ENCODE measurements at regions of chr2 and their contacts with region 1.

Region 1: GRCh38 chr2:20584637-20585321 is 66.1 kb downstream of the HS1BP3 start:
- DNase-seq: peak in 9 of 10 donors; percentile 43 to 89 (median 71)
- H3K4me3 ChIP-seq: no peak overlapping the region
- H3K27ac ChIP-seq: peak overlapping the region; percentile 7 to 90 (median 80)
- H3K27me3 ChIP-seq: no peaks in the 10 kb centered on the region
- CTCF ChIP-seq: peak in 6 of 56 donors; percentile 8 to 37 (median 15)

Region 2: DNA sequence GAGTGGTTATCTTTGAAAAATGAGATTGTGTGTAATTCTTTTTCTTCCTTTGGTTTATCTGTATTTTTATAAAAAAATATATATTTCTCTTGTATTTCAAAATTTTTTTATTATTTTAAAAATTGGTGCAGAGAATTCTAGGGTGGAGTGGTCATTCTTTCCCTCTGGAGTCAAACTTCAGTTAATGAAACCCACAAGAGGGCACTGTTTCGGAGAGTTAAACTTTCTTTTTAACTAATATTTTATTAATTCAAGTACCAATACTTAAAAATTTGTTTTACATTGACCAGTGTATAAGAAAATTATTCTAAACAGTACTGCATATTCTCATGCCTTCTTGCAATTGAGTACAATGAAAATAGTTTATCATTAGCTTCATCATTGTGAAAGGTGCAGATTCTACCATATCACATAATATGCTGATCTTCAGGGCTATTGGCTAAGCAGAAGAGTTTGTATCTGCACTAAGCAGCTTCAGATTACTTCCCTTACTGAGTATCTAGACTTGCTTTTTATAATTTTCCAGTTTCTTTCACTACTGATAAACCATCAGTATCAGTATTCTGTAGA is 16.1 kb after region 1 on chr2:
- intact Hi-C with region 1: loop called in 1 of 2 experiments (anchors 2 kb)
- DNase-seq: no peak
- H3K4me3 ChIP-seq: peak overlapping the region in 6 of 59 donors; percentile 6 to 32 (median 18)
- H3K27ac ChIP-seq: peak overlapping the region in 58 of 59 donors; percentile 64 to 98 (median 93)
- H3K27me3 ChIP-seq: no peaks in the 10 kb centered on the region
- CTCF ChIP-seq: peak; percentile 24 to 77 (median 54)

Region 3: DNA sequence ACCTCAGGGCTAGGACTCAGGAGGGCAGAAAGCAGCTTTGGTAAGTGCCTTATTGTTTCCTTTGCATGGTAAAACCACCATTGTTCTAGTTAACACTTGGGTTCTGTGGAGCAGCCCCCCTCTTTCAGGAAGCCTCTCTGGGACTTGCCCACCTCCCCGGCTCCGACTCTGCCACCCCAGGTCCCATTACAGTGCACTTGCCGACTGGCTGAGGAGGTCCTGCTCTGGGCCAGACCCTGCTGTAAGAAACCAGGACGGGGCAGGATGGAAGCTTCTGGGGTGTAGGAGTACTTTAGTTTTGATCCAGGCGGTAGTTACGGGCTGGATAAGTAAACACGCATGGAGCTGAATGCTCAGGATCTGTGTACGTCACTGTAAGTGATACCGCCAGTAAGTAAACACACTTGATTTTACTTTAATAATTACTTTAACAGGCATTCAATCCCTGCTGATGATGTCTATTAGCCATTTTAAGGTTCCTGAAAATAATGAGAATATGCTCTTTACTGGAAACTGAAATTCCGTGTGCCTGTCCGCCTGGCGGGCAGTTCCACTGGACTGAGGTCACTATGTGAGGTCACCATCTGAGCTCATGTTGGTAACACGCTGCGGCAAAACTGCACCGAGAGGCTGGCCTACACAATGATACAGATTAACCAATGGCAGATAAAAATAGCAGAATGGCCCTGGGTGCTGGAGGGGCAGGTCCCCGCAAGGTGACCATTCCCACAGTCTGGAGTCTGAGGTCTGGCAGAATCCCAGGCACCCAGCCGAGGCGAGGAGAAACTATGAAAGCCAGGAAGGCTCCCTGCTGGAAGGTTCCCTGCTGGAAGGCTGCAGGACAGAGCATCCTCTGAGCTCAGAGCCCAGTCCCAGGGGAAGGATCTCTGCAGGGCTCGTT is 41.0 kb after region 1 on chr2:
- intact Hi-C with region 1: loop called in 1 of 2 experiments (anchors 5 kb)
- DNase-seq: peak in 8 of 10 donors; percentile 22 to 48 (median 37)
- H3K4me3 ChIP-seq: peak overlapping the region in 1 of 59 donors; percentile 11
- H3K27ac ChIP-seq: peak overlapping the region in 58 of 59 donors; percentile 23 to 93 (median 79)
- H3K27me3 ChIP-seq: no peaks in the 10 kb centered on the region
- CTCF ChIP-seq: peak in 37 of 56 donors; percentile 8 to 58 (median 30)